GM12878 (cell line): ENCODE measurements at regions of chr17 and their contacts with region 1.

Region 1: GRCh38 chr17:37406635-37407461 is at the starts of genes ACACA and TADA2A:
- DNase-seq: no peak
- ATAC-seq: peak; percentile 95
- H3K4me3 ChIP-seq: peak within 1 kb of the TSS; percentile 96
- H3K27ac ChIP-seq: peak within 1 kb of the TSS; percentile 95
- H3K4me1 ChIP-seq: peaks cover 21% of the 10 kb centered on the region
- H3K27me3 ChIP-seq: no peaks in the 10 kb centered on the region
- CTCF ChIP-seq: no peak
- EP300 ChIP-seq: no peak
- POLR2A ChIP-seq: peak; percentile 84
- RAD21 ChIP-seq: no peak
- polyA plus RNA-seq, gene ACACA: 12.9 to 14.7 TPM
- polyA plus RNA-seq, gene TADA2A: 39.9 to 43.8 TPM

Region 2: GRCh38 chr17:37358830-37359681 is 47.8 kb before region 1 on chr17:
- CTCF ChIA-PET with region 1: no interaction called
- POLR2A ChIA-PET with region 1: interaction called, 7 read pairs
- RAD21 ChIA-PET with region 1: interaction called, 4 read pairs
- SMC1A ChIA-PET with region 1: no interaction called
- in situ Hi-C with region 1: no loop called
- intact Hi-C with region 1: loop called (anchors 5 kb)
- DNase-seq: peak; percentile 80
- ATAC-seq: peak; percentile 95
- H3K4me3 ChIP-seq: peak overlapping the region; percentile 78
- H3K27ac ChIP-seq: peak overlapping the region; percentile 71
- H3K4me1 ChIP-seq: peaks cover 12% of the 10 kb centered on the region
- H3K27me3 ChIP-seq: no peaks in the 10 kb centered on the region
- CTCF ChIP-seq: 0 out of 6 replicates have a peak, but pooled peaks of 1 of the 3 experiments have one; percentile 10
- EP300 ChIP-seq: no peak
- POLR2A ChIP-seq: peak; percentile 79
- RAD21 ChIP-seq: no peak

Region 3: GRCh38 chr17:37392024-37392590 is 14.7 kb before region 1 on chr17:
- CTCF ChIA-PET with region 1: interaction called, 15 read pairs
- POLR2A ChIA-PET with region 1: interaction called, 6 read pairs
- RAD21 ChIA-PET with region 1: interaction called, 4 read pairs
- SMC1A ChIA-PET with region 1: interaction called, 6 read pairs
- in situ Hi-C with region 1: no loop called
- intact Hi-C with region 1: no loop called
- DNase-seq: no peak
- ATAC-seq: peak; percentile 91
- H3K4me3 ChIP-seq: peak overlapping the region; percentile 37; the same call in 1 of the 2 replicates
- H3K27ac ChIP-seq: peak overlapping the region; percentile 71
- H3K4me1 ChIP-seq: peaks cover 26% of the 10 kb centered on the region
- H3K27me3 ChIP-seq: no peaks in the 10 kb centered on the region
- CTCF ChIP-seq: no peak
- EP300 ChIP-seq: no peak
- POLR2A ChIP-seq: no peak
- RAD21 ChIP-seq: no peak

Region 4: DNA sequence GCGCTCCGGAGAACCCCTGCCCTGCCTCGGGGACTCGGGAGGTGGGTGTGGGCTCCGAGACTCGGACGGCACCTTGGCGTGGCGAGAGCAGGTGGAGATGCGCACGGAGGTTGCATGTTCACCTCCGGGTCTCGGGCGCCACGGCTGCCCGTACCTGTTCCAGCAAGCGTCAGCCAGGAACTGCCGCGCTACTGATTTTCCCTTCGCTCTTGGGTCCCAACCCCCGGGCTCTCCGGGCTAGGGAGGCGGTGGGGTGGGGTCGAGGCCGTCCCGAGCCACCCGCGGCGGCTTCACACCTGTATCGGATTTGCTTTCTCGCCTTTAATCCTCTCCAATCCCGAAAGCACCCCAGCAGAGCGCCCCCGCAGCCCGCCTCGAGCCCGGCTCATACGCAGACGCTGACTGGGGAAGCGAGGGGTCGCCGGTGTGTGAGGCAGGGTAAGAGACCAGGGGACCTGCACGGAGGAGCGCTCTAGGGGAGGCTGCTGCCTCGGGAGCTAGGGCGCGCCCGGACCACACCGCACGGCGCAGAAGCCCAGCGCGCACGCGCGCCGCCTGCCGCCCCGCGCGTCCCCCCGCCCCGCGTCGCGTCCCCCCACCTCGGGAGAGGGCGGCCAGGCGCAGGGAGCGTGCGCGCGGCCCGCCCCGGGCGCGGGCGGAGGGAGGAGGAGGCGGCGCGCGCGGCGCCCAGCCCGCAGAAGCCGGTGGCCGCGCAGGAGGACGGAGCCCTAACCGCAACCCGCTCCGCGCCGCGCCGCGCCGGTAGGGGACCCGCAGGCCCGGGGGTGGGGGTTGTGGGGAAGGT is 82.6 kb after region 1 on chr17 and contains the start of gene DUSP14:
- CTCF ChIA-PET with region 1: no interaction called
- POLR2A ChIA-PET with region 1: interaction called, 3 read pairs
- RAD21 ChIA-PET with region 1: interaction called, 4 read pairs
- SMC1A ChIA-PET with region 1: interaction called, 14 read pairs
- in situ Hi-C with region 1: no loop called
- intact Hi-C with region 1: loop called (anchors 5 kb)
- DNase-seq: no peak
- ATAC-seq: peak; percentile 76
- H3K4me3 ChIP-seq: peak within 1 kb of the TSS; percentile 92
- H3K27ac ChIP-seq: peak within 1 kb of the TSS; percentile 53
- H3K4me1 ChIP-seq: peaks cover 17% of the 10 kb centered on the region
- H3K27me3 ChIP-seq: no peaks in the 10 kb centered on the region
- CTCF ChIP-seq: peak in 1 of 3 experiments; percentile 13; a peak in 1 of 6 replicates
- EP300 ChIP-seq: no peak
- POLR2A ChIP-seq: peak; percentile 88
- RAD21 ChIP-seq: no peak
- polyA plus RNA-seq, gene DUSP14: 21.1 to 36.5 TPM